A549 (cell line): ENCODE measurements at regions of chr11 and their contacts with region 1.

Region 1: DNA sequence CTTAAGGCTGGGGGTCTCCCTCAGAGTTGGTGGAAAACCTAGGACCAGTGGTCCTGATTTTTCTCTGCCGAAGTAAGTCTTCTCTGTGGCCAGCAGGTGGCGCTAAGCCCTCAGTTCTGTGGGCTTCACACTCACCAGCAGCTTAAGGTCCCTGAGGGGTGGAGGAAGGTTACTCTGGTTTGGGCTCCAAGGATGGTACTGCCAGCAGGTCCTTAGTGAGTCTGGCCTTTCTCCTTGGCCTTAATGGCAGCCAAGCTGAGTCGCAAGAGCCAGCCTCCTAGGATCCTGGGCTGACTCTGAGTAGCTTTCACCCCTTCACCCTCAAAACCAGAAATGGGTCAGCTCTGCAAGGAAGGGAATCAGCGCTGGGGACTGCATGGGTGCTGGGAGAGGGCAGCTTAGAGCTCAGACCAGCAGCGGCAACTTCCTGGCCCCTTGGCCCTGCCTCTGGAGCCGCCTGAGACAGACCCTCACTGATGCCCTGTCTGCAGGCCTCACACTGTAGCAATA is 4.4 kb downstream of the KCNJ11 start:
- DNase-seq: peak; percentile 59 to 89
- ATAC-seq: peak; percentile 41 to 79; a peak in 4 of 6 replicates
- H3K4me3 ChIP-seq: no peak overlapping the region
- H3K27ac ChIP-seq: no peak overlapping the region
- H3K4me1 ChIP-seq: no peaks in the 10 kb centered on the region
- CTCF ChIP-seq: peak; percentile 93
- EP300 ChIP-seq: no peak
- POLR2A ChIP-seq: no peak
- RAD21 ChIP-seq: peak; percentile 92 to 95

Region 2: GRCh38 chr11:16969010-16969999 is 414.8 kb before region 1 on chr11:
- CTCF ChIA-PET with region 1: no interaction called
- POLR2A ChIA-PET with region 1: no interaction called
- DNase-seq: no peak
- ATAC-seq: no peak
- H3K4me3 ChIP-seq: no peak overlapping the region
- H3K27ac ChIP-seq: no peak overlapping the region
- H3K4me1 ChIP-seq: peaks cover 24% of the 10 kb centered on the region
- CTCF ChIP-seq: no peak
- EP300 ChIP-seq: no peak
- POLR2A ChIP-seq: no peak
- RAD21 ChIP-seq: no peak

Region 3: GRCh38 chr11:17230867-17231851 is 152.9 kb before region 1 on chr11:
- CTCF ChIA-PET with region 1: interaction called, 12 read pairs
- POLR2A ChIA-PET with region 1: no interaction called
- DNase-seq: no peak
- ATAC-seq: no peak
- H3K4me3 ChIP-seq: no peak overlapping the region
- H3K27ac ChIP-seq: no peak overlapping the region
- H3K4me1 ChIP-seq: no peaks in the 10 kb centered on the region
- CTCF ChIP-seq: no peak
- EP300 ChIP-seq: no peak
- POLR2A ChIP-seq: no peak
- RAD21 ChIP-seq: no peak

Region 4: GRCh38 chr11:17343257-17343656 is 40.8 kb before region 1 on chr11:
- CTCF ChIA-PET with region 1: no interaction called
- POLR2A ChIA-PET with region 1: no interaction called
- DNase-seq: no peak
- ATAC-seq: no peak
- H3K4me3 ChIP-seq: no peak overlapping the region
- H3K27ac ChIP-seq: no peak overlapping the region
- H3K4me1 ChIP-seq: no peaks in the 10 kb centered on the region
- CTCF ChIP-seq: no peak
- EP300 ChIP-seq: no peak
- POLR2A ChIP-seq: no peak
- RAD21 ChIP-seq: no peak

Region 5: GRCh38 chr11:17366495-17366894 is 17.6 kb before region 1 on chr11:
- CTCF ChIA-PET with region 1: interaction called, 56 read pairs
- POLR2A ChIA-PET with region 1: no interaction called
- DNase-seq: no peak
- ATAC-seq: no peak
- H3K4me3 ChIP-seq: no peak overlapping the region
- H3K27ac ChIP-seq: no peak overlapping the region
- H3K4me1 ChIP-seq: no peaks in the 10 kb centered on the region
- CTCF ChIP-seq: no peak
- EP300 ChIP-seq: no peak
- POLR2A ChIP-seq: no peak
- RAD21 ChIP-seq: no peak

Region 6: DNA sequence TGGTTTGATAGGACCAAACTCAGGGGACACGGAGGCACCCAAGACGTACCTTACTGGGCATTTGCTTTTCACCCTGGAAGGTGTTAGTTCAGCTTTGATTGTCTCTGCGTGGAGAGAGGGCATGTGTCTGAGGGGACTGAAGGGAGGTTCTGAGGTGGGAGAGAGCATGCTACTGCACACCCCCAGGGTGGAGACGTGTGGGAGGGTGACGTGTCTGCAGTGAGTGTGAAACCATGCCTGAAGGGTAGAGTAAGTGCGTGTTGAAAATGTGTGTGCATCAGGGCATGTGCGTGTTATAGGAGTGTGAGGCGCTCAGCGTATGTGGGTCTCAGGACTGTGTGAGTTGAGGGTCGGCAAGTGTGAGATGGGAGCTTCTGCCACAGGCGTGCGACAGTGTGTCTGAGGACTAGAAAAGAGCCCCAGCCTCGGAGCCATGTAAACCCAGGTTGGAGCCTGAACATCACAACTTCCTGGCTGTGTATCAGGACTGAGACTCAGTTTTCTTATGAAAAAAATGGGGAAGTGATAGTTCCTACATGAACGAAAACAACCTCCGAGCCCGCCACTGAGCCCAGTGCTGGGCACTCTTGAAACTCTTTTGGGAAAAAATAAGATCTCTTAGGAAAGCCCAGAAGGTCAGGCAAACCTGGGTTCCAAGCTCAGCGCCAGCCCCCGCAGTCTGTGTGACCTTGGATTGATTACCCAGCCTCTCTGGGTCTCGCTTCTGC is 16.2 kb after region 1 on chr11:
- CTCF ChIA-PET with region 1: interaction called, 59 read pairs
- POLR2A ChIA-PET with region 1: no interaction called
- DNase-seq: no peak
- ATAC-seq: no peak
- H3K4me3 ChIP-seq: no peak overlapping the region
- H3K27ac ChIP-seq: no peak overlapping the region
- H3K4me1 ChIP-seq: peaks cover 2% of the 10 kb centered on the region; the same call in 2 of the 3 replicates
- CTCF ChIP-seq: no peak
- EP300 ChIP-seq: no peak
- POLR2A ChIP-seq: no peak
- RAD21 ChIP-seq: no peak

Region 7: DNA sequence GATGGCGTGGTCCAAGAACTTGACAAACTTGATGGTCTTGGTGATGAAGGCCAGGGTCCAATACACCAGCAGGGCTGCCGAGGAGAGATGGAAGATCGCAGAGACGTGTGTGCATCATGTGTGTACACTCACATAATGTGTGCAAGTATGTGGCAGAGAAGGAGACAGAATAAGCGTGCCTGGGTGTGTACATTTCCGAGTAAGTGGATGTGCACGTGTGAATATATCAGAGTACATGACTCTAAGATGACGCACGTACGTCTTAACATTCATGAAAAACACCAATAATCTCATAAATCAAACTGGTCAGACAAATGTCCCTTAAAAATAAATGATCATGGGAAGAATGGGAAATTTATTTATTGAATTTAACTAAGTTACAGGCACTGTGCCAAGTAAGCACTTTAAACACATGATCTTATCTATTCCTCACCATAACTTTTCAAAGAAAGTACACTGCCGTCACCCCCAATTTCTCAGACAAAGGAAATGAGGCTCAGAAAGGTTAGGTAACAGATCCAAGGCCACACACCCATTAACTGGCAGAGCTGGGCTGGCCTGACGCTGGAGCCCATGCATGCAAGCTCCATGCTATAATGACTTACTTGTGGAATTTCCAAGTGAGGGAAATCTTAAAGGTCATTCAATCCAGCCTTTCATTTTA is 79.6 kb after region 1 on chr11:
- CTCF ChIA-PET with region 1: interaction called, 21 read pairs
- POLR2A ChIA-PET with region 1: no interaction called
- DNase-seq: no peak
- ATAC-seq: no peak
- H3K4me3 ChIP-seq: no peak overlapping the region
- H3K27ac ChIP-seq: no peak overlapping the region
- H3K4me1 ChIP-seq: no peaks in the 10 kb centered on the region
- CTCF ChIP-seq: no peak
- EP300 ChIP-seq: no peak
- POLR2A ChIP-seq: no peak
- RAD21 ChIP-seq: no peak

Region 8: GRCh38 chr11:17489751-17490150 is 105.7 kb after region 1 on chr11:
- CTCF ChIA-PET with region 1: interaction called, 1,119 read pairs
- POLR2A ChIA-PET with region 1: no interaction called
- DNase-seq: no peak
- ATAC-seq: no peak
- H3K4me3 ChIP-seq: no peak overlapping the region
- H3K27ac ChIP-seq: no peak overlapping the region
- H3K4me1 ChIP-seq: no peaks in the 10 kb centered on the region
- CTCF ChIP-seq: no peak
- EP300 ChIP-seq: no peak
- POLR2A ChIP-seq: no peak
- RAD21 ChIP-seq: no peak

Region 9: DNA sequence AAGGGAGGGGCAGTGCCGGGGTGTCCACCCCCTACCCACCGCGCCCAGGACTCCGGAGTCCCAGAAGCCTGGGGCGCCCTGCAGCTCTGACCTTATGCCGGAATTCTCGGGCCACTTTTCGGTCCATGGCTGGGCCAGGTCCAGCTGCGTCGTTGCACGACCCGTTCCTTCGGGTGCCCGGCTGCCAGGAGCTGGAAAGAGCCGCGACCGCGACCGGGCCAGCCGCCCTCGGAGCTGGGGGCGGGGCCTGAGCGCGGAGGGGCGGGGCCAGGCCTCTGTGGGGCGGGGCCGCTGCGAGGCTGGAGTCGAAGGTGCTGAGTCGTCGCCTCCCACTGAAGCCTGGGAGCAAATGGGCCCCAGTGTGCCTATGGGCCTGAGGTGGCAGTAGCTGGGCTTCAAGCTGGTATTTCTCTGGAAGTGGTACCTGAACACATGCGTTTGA is 160.1 kb after region 1 on chr11 and contains the start of gene USH1C:
- CTCF ChIA-PET with region 1: interaction called, 12 read pairs
- POLR2A ChIA-PET with region 1: no interaction called
- DNase-seq: peak; percentile 44 to 61
- ATAC-seq: peak; percentile 77 to 90
- H3K4me3 ChIP-seq: peak within 1 kb of the TSS; percentile 53
- H3K27ac ChIP-seq: peak within 1 kb of the TSS; percentile 36 to 82
- H3K4me1 ChIP-seq: peaks cover 24% of the 10 kb centered on the region
- CTCF ChIP-seq: no peak
- EP300 ChIP-seq: no peak
- POLR2A ChIP-seq: no peak
- RAD21 ChIP-seq: no peak
- polyA plus RNA-seq, gene USH1C: 8.6 and 10.4 TPM in 2 replicates